ENCODE measurements at regions of chr11 and their contacts with region 1.

Region 1: GRCh38 chr11:19259487-19260345 is 19.0 kb upstream of the E2F8 start:
- DNase-seq: peak; percentile 76
- ATAC-seq: peak; percentile 84
- H3K4me3 ChIP-seq: peak overlapping the region; percentile 58
- H3K27ac ChIP-seq: no peak overlapping the region
- H3K4me1 ChIP-seq: no peaks in the 10 kb centered on the region
- H3K27me3 ChIP-seq: no peaks in the 10 kb centered on the region
- CTCF ChIP-seq: peak; percentile 91

Region 2: DNA sequence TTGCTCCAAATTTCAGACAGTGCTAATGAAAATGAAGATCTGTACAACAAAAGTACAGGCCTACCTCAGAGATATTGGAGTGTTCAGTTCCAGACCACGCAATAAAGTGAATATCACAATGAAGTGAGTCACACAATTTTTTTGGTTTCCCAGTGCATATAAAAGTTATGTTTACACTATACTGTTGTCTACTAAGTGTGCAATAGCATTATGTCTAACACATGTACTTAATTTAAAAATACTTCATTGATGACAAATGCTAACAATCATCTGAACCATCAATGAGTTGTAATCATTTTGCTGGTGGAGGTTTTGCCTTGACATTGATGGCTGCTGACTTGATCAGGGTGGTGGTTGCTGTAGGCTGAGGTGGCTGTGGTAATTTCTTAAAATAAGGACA is 41.6 kb after region 1 on chr11:
- CTCF ChIA-PET with region 1: no interaction called
- POLR2A ChIA-PET with region 1: no interaction called
- intact Hi-C with region 1: no loop called
- DNase-seq: peak; percentile 33
- ATAC-seq: peak; percentile 22; the same call in 1 of the 2 replicates
- H3K4me3 ChIP-seq: no peak overlapping the region
- H3K27ac ChIP-seq: no peak overlapping the region
- H3K4me1 ChIP-seq: peaks cover 6% of the 10 kb centered on the region; the same call in 1 of the 2 replicates
- H3K27me3 ChIP-seq: no peaks in the 10 kb centered on the region
- CTCF ChIP-seq: no peak

Region 3: DNA sequence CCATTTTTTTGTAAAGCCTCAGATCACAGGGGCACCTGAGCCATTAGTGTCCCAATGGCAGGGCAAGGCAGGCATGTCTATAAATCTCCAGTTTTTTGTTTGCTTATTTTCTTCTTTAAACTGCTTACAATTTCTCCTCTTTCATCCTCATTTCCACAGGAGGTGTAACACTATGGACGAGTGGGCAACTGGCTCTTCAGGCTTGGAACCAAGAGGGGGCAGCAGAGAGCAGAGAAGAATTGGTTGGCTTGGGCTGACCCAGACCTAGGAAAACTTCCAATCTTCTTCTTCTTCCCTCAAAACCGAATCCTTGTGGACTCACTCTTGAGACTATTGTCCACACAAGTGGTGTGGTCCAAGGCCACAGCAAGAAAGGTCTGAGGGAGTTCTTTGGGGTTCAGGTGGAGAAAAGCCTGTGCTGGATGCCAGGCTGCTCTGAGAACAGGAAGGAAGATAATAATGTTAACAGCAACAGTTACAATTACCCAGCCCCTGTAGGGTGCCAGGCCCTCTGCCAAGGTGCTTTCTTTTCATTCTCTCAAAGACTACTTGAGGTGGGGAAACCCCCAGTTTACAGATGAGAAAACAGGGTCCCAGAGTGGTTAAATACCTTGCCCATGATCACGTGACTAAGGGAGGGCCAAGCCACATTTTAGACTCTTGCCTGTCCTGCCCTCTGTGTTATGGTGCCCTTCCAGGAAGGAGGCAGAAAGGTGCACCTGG is 51.8 kb after region 1 on chr11:
- CTCF ChIA-PET with region 1: no interaction called
- POLR2A ChIA-PET with region 1: no interaction called
- intact Hi-C with region 1: loop called (anchors 5 kb)
- DNase-seq: peak; percentile 69
- ATAC-seq: peak; percentile 90
- H3K4me3 ChIP-seq: no peak overlapping the region
- H3K27ac ChIP-seq: no peak overlapping the region
- H3K4me1 ChIP-seq: no peaks in the 10 kb centered on the region
- H3K27me3 ChIP-seq: no peaks in the 10 kb centered on the region
- CTCF ChIP-seq: peak; percentile 82

Region 4: DNA sequence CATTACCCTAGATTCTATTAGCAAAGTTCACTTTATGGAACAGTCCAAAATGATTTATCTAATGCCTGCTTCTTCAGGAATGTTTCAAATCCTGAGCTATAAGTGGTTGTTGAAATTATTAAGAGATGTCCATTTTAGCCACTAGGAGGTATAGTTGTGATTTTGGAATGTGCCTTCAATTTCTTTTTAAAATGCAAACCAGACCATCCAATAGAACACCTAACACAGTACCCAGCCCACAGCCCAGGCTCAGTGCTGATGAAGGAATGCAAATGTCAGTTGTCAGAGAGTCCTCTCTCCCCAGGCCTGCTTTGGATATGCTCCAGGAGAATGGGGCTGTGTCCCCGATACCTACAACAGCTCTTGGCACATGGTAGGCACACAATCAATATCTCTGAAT is 66.8 kb after region 1 on chr11:
- CTCF ChIA-PET with region 1: interaction called, 7 read pairs
- POLR2A ChIA-PET with region 1: no interaction called
- intact Hi-C with region 1: loop called (anchors 5 kb)
- DNase-seq: peak; percentile 39
- ATAC-seq: peak; percentile 64
- H3K4me3 ChIP-seq: no peak overlapping the region
- H3K27ac ChIP-seq: no peak overlapping the region
- H3K4me1 ChIP-seq: no peaks in the 10 kb centered on the region
- H3K27me3 ChIP-seq: peaks cover 35% of the 10 kb centered on the region
- CTCF ChIP-seq: peak; percentile 64

Measured in PC-3 (cell line).